Activated naive CD4-positive, alpha-beta T cell treated with anti-CD3 and anti-CD28 coated beads, Interleukin-2, amount 10 ng/mL, durations not matched to agents 7 days and 5 days (primary cell): ENCODE measurements at regions of chr6 and their contacts with region 1.

Region 1: DNA sequence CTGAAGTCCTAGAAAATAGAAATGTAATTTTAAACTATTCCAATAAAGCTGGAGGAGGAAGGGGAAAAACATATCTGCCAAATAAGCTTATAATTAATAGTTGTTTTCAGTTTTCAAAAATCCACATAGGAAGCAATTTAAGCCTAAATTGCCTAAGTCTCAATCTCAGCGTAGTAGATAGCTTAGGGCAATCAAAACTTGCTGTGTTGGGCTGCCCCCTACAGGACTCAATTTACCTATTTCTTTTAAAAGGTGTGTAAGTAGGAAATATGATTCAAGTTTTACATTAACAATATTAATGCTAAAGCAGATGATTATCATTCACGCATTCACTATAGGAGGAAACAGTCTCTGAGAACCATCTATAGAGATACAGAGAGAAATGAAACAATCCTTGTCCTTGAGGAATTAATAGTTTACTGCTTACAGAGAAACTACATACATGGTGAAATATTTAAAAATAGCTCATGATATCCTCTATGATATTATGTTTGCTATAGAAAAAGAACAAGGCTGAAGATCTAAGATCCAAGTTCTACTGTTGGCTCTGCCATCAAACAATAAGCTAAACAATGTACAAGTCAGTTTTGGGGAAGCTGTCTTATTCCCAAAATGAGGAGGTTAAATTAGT is 102.1 kb downstream of the ATG5 start:
- DNase-seq: peak; percentile 84
- H3K4me3 Mint-ChIP-seq: no peak overlapping the region
- H3K27ac Mint-ChIP-seq: no peak overlapping the region
- H3K4me1 Mint-ChIP-seq: peaks cover 17% of the 10 kb centered on the region
- H3K27me3 Mint-ChIP-seq: no peaks in the 10 kb centered on the region

Region 2: GRCh38 chr6:105484238-105485161 is 738.9 kb before region 1 on chr6:
- CTCF ChIA-PET with region 1: interaction called, 11 read pairs
- DNase-seq: no peak
- H3K4me3 Mint-ChIP-seq: no peak overlapping the region
- H3K27ac Mint-ChIP-seq: no peak overlapping the region
- H3K4me1 Mint-ChIP-seq: peaks cover 32% of the 10 kb centered on the region
- H3K27me3 Mint-ChIP-seq: peaks cover 20% of the 10 kb centered on the region

Region 3: DNA sequence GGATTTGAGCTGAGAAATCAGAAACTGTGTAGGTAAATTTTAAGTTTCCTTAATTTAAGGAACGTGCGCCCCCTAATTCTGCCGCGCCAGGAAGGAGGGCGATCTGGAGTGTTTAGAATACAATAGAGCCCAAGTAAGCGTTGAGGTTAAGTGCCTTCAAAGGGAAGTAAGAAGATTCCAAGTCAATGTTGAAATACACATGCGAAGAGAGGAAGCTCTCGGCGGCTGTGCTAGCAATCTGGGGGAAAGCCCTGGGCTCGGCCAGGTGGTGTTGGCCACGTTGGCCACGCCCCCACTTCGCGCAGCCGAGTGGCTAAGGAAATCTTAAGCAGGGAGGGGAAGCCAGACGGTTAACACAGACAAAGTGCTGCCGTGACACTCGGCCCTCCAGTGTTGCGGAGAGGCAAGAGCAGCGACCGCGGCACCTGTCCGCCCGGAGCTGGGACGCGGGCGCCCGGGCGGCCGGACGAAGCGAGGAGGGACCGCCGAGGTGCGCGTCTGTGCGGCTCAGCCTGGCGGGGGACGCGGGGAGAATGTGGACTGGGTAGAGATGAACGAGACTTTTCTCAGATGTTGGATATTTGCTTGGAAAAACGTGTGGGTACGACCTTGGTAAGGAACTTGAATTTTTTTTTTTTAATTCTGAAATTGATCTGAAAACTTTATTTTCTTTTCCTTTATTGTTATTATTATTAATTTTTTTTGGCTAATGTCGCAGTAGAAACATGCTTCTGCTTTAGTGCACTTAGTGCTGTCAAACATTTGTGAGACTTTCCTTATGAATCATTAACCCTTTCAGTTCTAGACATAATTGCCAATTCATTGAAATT is 137.2 kb before region 1 on chr6 and contains the start of gene PRDM1:
- CTCF ChIA-PET with region 1: interaction called, 35 read pairs
- DNase-seq: peak; percentile 88
- H3K4me3 Mint-ChIP-seq: peak within 1 kb of the TSS; percentile 84
- H3K27ac Mint-ChIP-seq: peak within 1 kb of the TSS; percentile 81
- H3K4me1 Mint-ChIP-seq: peaks cover 92% of the 10 kb centered on the region
- H3K27me3 Mint-ChIP-seq: peaks cover 29% of the 10 kb centered on the region

Region 4: GRCh38 chr6:106141441-106142237 is 81.8 kb before region 1 on chr6:
- CTCF ChIA-PET with region 1: interaction called, 24 read pairs
- DNase-seq: peak; percentile 73
- H3K4me3 Mint-ChIP-seq: peak overlapping the region; percentile 6
- H3K27ac Mint-ChIP-seq: peak overlapping the region; percentile 96
- H3K4me1 Mint-ChIP-seq: peaks cover 56% of the 10 kb centered on the region
- H3K27me3 Mint-ChIP-seq: peaks cover 8% of the 10 kb centered on the region

Region 5: GRCh38 chr6:106339334-106340029 is 116.1 kb after region 1 on chr6:
- CTCF ChIA-PET with region 1: no interaction called
- DNase-seq: peak; percentile 57
- H3K4me3 Mint-ChIP-seq: no peak overlapping the region
- H3K27ac Mint-ChIP-seq: no peak overlapping the region
- H3K4me1 Mint-ChIP-seq: peaks cover 2% of the 10 kb centered on the region
- H3K27me3 Mint-ChIP-seq: peaks cover 30% of the 10 kb centered on the region

Region 6: GRCh38 chr6:106453756-106454367 is 230.4 kb after region 1 on chr6:
- CTCF ChIA-PET with region 1: no interaction called
- DNase-seq: no peak
- H3K4me3 Mint-ChIP-seq: no peak overlapping the region
- H3K27ac Mint-ChIP-seq: no peak overlapping the region
- H3K4me1 Mint-ChIP-seq: no peaks in the 10 kb centered on the region
- H3K27me3 Mint-ChIP-seq: peaks cover 12% of the 10 kb centered on the region